T-cell (primary cell): ENCODE measurements at regions of chr10 and their contacts with region 1.

Region 1: GRCh38 chr10:88064608-88065382 is 201.4 kb downstream of the PTEN start:
- DNase-seq: peak in 32 of 35 experiments; percentile 2 to 74 (median 36)
- ATAC-seq: peak; percentile 79 to 95 (median 82)
- H3K4me3 ChIP-seq: no peak overlapping the region
- H3K4me3 Mint-ChIP-seq: peak overlapping the region in 1 of 3 donors; percentile 66
- H3K27ac ChIP-seq: peak overlapping the region; percentile 69
- H3K27ac Mint-ChIP-seq: peak overlapping the region; percentile 86 to 88
- H3K4me1 ChIP-seq: peaks cover 50 to 86% of the 10 kb centered on the region in 2 experiments
- H3K4me1 Mint-ChIP-seq: peaks cover 72 to 83% (median 80%) of the 10 kb centered on the region in 3 donors
- H3K27me3 ChIP-seq: no peaks in the 10 kb centered on the region
- H3K27me3 Mint-ChIP-seq: no peaks in the 10 kb centered on the region

Region 2: DNA sequence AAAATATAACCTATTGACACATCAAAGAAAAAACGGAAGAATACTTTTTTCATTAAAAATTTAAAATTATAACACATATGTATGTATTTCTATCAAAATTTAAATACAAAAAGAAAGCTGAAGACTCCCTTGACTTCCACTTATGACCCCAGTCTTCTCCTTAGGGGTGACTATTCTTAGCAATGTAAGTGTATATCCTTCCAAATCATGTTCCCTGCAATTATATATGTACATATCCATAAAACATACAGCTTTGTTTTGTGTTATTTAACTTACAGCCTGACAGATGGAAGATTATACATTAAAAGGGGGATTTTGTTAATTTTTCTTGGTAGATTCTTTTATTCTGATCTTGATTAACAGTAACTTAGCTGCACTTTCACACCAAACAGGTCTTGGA is 979.3 kb before region 1 on chr10:
- CTCF ChIA-PET with region 1: no interaction called
- POLR2A ChIA-PET with region 1: interaction called in 1 of 2 experiments, 13 read pairs
- DNase-seq: no peak
- ATAC-seq: no peak
- H3K4me3 ChIP-seq: no peak overlapping the region
- H3K4me3 Mint-ChIP-seq: no peak overlapping the region
- H3K27ac ChIP-seq: no peak overlapping the region
- H3K27ac Mint-ChIP-seq: peak overlapping the region; percentile 2 to 53
- H3K4me1 ChIP-seq: peaks cover 4 to 16% of the 10 kb centered on the region in 2 experiments
- H3K4me1 Mint-ChIP-seq: peaks cover 79 to 82% (median 80%) of the 10 kb centered on the region in 3 donors
- H3K27me3 ChIP-seq: no peaks in the 10 kb centered on the region
- H3K27me3 Mint-ChIP-seq: no peaks in the 10 kb centered on the region

Region 3: DNA sequence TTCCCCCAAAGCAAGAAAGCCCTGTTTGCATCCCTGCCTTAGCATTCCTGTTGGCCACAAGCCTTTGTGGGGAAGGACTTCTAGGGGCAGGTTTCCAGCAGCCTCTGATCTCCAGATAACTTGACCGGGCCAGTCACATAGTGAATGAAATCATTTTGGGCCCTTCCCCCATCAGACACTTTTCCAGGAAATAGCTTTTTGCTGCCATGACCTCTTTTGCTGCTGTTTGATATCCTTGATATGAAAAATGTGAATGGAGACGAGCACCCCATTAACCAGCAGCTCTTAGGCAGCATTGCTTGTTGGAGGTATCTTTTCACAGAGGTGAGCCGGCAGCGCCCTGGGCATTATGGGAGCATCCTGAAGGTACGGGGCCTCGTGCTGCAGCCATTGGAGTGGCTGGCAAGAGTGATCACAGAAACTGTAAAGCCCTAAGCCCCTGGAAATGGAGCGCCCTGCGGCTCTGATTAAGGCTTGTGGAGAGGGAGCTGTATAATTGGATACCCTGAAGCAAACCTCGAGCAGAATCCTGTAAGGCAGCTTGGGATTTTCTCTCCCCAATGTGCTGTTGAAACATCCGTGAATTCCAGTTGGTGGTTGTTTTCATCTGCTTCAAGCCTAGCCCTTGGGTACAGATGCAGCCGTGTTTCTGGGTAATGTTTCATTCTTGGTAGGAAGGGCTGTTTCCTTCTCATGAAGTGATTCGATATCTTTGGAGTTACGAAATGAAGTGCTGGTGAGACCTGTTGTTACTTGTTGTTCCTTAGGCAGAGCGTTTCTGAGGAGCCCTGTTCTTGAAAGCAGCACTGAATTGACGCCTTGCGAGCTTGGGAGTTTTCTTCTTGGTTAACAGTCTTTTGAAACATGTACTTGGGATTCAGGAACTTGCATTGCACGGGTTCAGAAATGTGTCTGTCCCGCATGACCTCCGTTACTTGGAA is 22.4 kb before region 1 on chr10:
- CTCF ChIA-PET with region 1: interaction called in 1 of 2 experiments, 3 read pairs
- POLR2A ChIA-PET with region 1: interaction called in 1 of 2 experiments, 15 read pairs
- DNase-seq: no peak
- ATAC-seq: no peak
- H3K4me3 ChIP-seq: no peak overlapping the region
- H3K4me3 Mint-ChIP-seq: no peak overlapping the region
- H3K27ac ChIP-seq: no peak overlapping the region
- H3K27ac Mint-ChIP-seq: no peak overlapping the region
- H3K4me1 ChIP-seq: peaks cover 3 to 5% of the 10 kb centered on the region in 2 experiments
- H3K4me1 Mint-ChIP-seq: peaks cover 22 to 36% (median 24%) of the 10 kb centered on the region in 3 donors
- H3K27me3 ChIP-seq: peaks cover 0 to 4% of the 10 kb centered on the region in 2 experiments
- H3K27me3 Mint-ChIP-seq: no peaks in the 10 kb centered on the region

Region 4: GRCh38 chr10:88386821-88387773 is 322.3 kb after region 1 on chr10:
- CTCF ChIA-PET with region 1: interaction called in 1 of 2 experiments, 4 read pairs
- POLR2A ChIA-PET with region 1: interaction called in 1 of 2 experiments, 16 read pairs
- DNase-seq: peak in 9 of 35 experiments; percentile 2 to 53 (median 10)
- ATAC-seq: peak in 3 of 4 experiments; percentile 18 to 51 (median 44)
- H3K4me3 ChIP-seq: peak overlapping the region in 1 of 2 donors; percentile 15
- H3K4me3 Mint-ChIP-seq: no peak overlapping the region
- H3K27ac ChIP-seq: peak overlapping the region; percentile 96
- H3K27ac Mint-ChIP-seq: no peak overlapping the region
- H3K4me1 ChIP-seq: peaks cover 34 to 73% of the 10 kb centered on the region in 2 experiments
- H3K4me1 Mint-ChIP-seq: peaks cover 16 to 30% (median 30%) of the 10 kb centered on the region in 3 donors
- H3K27me3 ChIP-seq: no peaks in the 10 kb centered on the region
- H3K27me3 Mint-ChIP-seq: no peaks in the 10 kb centered on the region